Colonic mucosa (tissue), 4 donors: ENCODE measurements at regions of chr11 and their contacts with region 1.

Region 1: DNA sequence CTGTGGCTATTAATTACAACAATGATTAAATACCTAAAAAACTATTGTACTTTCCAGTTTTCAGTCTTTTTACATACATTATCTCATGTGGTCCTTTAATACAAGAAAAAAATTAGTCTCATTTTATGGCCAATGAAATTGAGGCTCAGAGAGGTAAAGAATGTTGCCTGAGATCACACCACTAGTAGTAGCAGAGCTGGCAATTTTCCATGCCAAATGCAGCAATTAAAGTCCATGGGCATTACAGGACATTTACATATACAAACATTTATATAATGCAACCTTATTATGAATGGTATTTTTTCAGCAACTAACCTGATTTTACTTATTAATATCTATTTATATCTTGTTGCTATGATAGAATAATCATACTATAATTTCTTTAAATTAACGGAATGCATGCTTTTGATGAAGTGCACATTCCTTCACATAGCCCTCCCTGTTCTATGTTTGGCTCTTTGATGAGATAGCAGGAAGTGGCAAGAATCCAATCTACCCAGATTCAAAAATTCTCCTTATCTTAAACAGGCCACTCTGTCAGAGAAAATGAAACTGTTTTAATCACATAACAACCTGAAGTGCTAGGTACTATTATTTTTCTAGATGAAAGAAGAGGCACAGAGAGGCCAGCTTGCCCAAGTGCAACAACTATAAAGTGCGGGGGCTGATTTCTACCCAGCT is 120.9 kb upstream of the LDLRAD3 start:
- DNase-seq: no peak
- H3K4me3 ChIP-seq: no peak overlapping the region
- H3K27ac ChIP-seq: no peak overlapping the region
- H3K4me1 ChIP-seq: no peaks in the 10 kb centered on the region
- H3K27me3 ChIP-seq: no peaks in the 10 kb centered on the region
- CTCF ChIP-seq: no peak

Region 2: GRCh38 chr11:35617687-35618496 is 205.1 kb before region 1 on chr11 and contains the start of gene FJX1:
- intact Hi-C with region 1: loop called (anchors 5 kb)
- DNase-seq: peak; percentile 21
- H3K4me3 ChIP-seq: peak within 1 kb of the TSS; percentile 36
- H3K27ac ChIP-seq: peak within 1 kb of the TSS; percentile 41
- H3K4me1 ChIP-seq: peaks cover 8% of the 10 kb centered on the region
- H3K27me3 ChIP-seq: peaks cover 40% of the 10 kb centered on the region
- CTCF ChIP-seq: no peak
- total RNA-seq, gene FJX1: 0.32 to 1.6 TPM

Region 3: DNA sequence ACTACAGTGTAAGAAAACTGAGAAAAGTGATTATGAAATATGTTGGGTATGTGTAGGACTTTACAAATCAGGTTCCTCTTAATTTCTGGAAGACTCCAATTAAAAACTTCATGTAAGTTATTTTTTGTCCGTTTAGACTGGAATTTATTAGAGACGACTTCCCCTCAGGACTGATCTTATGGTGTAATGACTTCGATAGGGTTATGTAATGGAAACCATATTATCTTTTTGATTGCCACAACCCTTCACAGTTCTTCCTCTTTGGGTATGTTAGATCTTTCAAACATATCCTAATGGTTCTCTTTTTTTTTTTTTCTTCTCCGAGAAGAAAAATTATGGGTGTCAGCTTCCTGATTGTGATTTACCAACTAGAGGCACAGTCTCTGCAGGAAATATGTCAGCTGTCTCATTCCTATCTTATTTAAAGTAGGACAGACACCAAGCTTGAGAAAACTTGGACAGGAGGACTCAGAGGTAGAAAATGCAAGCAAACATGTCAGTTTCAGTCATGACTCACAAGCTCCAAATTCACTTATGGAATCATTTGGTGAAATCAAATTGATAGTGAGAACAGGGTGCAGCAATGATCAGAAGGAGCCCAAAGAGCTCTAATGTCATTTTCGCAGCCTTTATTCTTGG is 109.8 kb after region 1 on chr11:
- intact Hi-C with region 1: no loop called
- DNase-seq: no peak
- H3K4me3 ChIP-seq: no peak overlapping the region
- H3K27ac ChIP-seq: no peak overlapping the region
- H3K4me1 ChIP-seq: no peaks in the 10 kb centered on the region
- H3K27me3 ChIP-seq: no peaks in the 10 kb centered on the region
- CTCF ChIP-seq: no peak

Region 4: GRCh38 chr11:36131721-36132397 is 308.9 kb after region 1 on chr11:
- intact Hi-C with region 1: loop called (anchors 10 kb)
- DNase-seq: peak; percentile 27
- H3K4me3 ChIP-seq: no peak overlapping the region
- H3K27ac ChIP-seq: no peak overlapping the region
- H3K4me1 ChIP-seq: no peaks in the 10 kb centered on the region
- H3K27me3 ChIP-seq: no peaks in the 10 kb centered on the region
- CTCF ChIP-seq: no peak

Region 5: DNA sequence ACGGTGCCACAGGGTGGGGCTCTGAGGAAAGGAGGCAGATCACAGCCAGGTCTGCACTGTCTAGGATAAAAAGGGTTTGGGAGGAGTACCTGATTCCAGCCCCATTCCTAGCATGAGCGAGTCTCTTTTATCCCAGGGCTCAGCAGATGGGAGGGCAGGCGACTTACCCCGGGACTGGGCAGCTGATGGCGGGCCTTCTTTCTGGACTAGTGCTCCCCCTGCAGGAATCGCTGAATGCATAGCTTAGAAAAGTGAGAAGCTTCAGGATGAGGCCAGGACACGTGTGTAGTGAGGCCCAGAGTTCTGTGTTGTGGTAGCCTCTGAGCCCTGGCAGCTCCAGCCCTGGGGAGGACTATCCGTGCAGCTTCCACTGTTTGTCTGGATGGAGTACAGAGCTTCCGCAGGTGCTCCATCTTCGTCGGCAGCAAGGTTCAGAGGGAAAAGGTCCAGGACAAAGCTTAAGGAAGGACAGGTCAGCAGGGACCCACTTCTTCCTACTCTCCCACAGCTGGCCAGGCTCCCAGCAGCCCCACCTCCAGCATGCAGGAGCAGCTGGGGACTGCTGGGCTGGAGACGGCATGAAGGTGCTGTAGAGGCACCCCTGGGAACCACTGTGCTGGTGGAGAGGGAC is 435.9 kb after region 1 on chr11:
- intact Hi-C with region 1: loop called (anchors 5 kb)
- DNase-seq: peak; percentile 31
- H3K4me3 ChIP-seq: no peak overlapping the region
- H3K27ac ChIP-seq: no peak overlapping the region
- H3K4me1 ChIP-seq: no peaks in the 10 kb centered on the region
- H3K27me3 ChIP-seq: no peaks in the 10 kb centered on the region
- CTCF ChIP-seq: peak; percentile 22